Tibial artery (tissue), 4 donors: ENCODE measurements at regions of chr2 and their contacts with region 1.

Region 1: DNA sequence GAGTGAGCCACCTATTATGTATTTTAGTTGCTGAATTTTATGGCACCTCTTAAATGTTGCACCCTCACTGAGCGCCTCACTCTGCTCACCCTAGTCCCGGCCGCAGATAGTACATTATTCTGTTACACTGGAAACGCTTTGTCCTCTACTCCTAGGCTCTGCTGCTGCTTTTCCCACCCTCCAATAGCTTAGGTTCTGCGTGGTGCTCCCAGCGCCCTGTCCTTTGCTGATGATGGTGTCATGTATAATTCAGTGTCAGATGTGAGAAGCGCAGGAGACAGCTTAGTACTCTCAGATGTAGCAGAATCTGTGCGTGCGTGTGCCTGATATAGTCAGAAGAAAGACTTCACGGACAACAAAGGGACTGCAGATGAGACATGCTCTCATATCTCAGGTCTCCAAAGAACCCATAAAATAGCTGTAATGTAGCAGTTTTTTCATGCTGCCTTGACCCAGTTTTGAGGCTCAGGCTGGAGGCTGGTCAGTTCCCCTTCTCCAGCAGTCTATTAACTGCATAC is 1.4 kb upstream of the REEP1 start:
- DNase-seq: no peak
- H3K4me3 ChIP-seq: no peak overlapping the region
- H3K27ac ChIP-seq: no peak overlapping the region
- H3K4me1 ChIP-seq: peaks cover 0 to 38% (median 18%) of the 10 kb centered on the region in 4 donors
- H3K27me3 ChIP-seq: no peaks in the 10 kb centered on the region
- CTCF ChIP-seq: no peak

Region 2: DNA sequence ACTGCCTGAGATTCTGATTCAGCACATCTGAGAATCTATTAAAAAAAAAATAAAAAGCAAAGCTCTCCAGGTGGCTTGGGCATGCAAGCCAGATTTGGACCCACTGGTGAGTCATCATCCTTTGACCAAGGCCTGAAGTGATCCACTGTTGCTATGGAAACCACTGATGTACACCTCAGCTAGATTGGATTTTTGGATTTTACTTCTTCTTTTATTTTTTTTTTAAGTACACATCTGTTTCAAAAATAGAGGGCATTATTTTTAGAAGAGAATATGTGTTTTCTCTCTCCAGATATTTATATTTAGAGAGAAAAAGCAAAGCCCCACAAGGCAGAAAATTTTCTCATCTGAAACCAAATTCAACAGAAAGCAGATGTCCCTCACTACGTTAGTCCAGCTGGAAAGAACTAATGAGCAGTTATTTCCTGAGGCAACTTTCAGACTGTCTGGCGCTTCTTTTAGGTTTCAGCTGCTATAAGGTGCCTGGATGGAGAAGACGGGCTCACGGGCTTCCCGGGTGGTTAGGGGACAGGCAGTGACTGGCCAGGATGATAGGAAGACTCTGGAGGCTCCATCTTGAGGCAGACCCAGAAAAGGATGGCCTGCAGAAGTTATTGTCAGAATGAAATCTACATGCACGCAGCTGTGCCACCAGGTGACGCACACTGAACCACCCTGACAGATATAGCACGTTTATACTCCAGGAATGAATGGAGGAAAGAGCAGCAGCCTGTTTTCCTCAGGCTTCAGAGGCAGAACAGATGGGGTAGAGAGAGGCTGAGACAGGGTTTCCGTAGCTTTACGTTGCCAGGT is 89.1 kb before region 1 on chr2:
- intact Hi-C with region 1: loop called (anchors 2 kb)
- DNase-seq: peak in 1 of 2 donors; percentile 30
- H3K4me3 ChIP-seq: no peak overlapping the region
- H3K27ac ChIP-seq: peak overlapping the region; percentile 63 to 71
- H3K4me1 ChIP-seq: peaks cover 0 to 25% (median 13%) of the 10 kb centered on the region in 4 donors
- H3K27me3 ChIP-seq: no peaks in the 10 kb centered on the region
- CTCF ChIP-seq: no peak